GM12878 (cell line): ENCODE measurements at regions of chr11 and their contacts with region 1.

Region 1: DNA sequence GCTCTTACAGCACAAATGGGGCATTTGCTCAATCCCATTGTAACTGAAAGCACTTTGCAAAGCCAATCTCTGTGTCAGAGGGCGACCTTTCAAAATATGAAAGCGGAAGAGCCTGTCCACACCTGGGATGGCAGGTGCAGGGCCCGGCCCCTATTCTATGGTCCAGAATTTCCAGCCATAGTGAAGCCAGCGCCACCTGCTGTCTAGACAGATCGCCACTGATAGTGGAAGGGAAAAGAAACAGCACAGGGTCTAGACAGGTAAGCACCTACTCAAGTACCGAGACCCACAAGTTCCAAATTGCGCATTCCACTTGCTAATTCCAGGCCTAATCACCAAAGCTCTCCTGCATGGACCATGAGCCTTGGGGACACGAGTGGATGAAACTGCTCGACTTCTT is 141.4 kb downstream of the NTM start:
- DNase-seq: no peak
- ATAC-seq: peak; percentile 80
- H3K4me3 ChIP-seq: no peak overlapping the region
- H3K27ac ChIP-seq: no peak overlapping the region
- H3K4me1 ChIP-seq: no peaks in the 10 kb centered on the region
- H3K27me3 ChIP-seq: no peaks in the 10 kb centered on the region
- CTCF ChIP-seq: peak; percentile 57 to 64 (median 60)
- EP300 ChIP-seq: no peak
- POLR2A ChIP-seq: no peak
- RAD21 ChIP-seq: peak; percentile 56

Region 2: DNA sequence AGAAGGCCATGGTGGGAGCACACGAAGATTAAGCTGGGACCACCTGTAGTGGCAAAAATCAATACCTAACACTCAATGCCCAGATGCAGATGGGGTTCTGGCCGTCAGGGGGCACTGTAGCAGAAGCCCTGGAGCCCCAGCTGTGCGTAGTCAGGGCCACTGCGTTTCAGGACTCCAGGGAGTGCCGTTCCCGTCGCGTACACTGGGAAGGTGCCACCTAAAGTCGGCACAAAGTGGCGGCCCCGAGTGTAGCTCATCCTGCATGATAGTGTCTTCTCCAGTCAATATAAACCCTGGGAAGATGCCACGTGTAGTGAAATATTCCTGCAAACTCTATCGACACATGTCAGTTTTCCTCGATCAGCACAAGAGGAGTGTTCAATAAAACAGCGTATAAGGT is 265.1 kb before region 1 on chr11:
- CTCF ChIA-PET with region 1: interaction called, 3 read pairs
- POLR2A ChIA-PET with region 1: no interaction called
- RAD21 ChIA-PET with region 1: interaction called, 3 read pairs
- SMC1A ChIA-PET with region 1: no interaction called
- in situ Hi-C with region 1: no loop called
- intact Hi-C with region 1: loop called (anchors 10 kb)
- DNase-seq: no peak
- ATAC-seq: peak; percentile 66
- H3K4me3 ChIP-seq: no peak overlapping the region
- H3K27ac ChIP-seq: no peak overlapping the region
- H3K4me1 ChIP-seq: no peaks in the 10 kb centered on the region
- H3K27me3 ChIP-seq: no peaks in the 10 kb centered on the region; a peak in 2 of 4 replicates
- CTCF ChIP-seq: peak; percentile 42 to 59 (median 48); a peak in 5 of 6 replicates
- EP300 ChIP-seq: no peak
- POLR2A ChIP-seq: no peak
- RAD21 ChIP-seq: peak; percentile 33

Region 3: GRCh38 chr11:131408025-131408640 is 103.7 kb before region 1 on chr11:
- CTCF ChIA-PET with region 1: no interaction called
- POLR2A ChIA-PET with region 1: no interaction called
- RAD21 ChIA-PET with region 1: no interaction called
- SMC1A ChIA-PET with region 1: no interaction called
- in situ Hi-C with region 1: no loop called
- intact Hi-C with region 1: loop called (anchors 1 kb)
- DNase-seq: no peak
- ATAC-seq: peak; percentile 74
- H3K4me3 ChIP-seq: no peak overlapping the region
- H3K27ac ChIP-seq: no peak overlapping the region
- H3K4me1 ChIP-seq: no peaks in the 10 kb centered on the region
- H3K27me3 ChIP-seq: no peaks in the 10 kb centered on the region; a peak in 1 of 4 replicates
- CTCF ChIP-seq: peak; percentile 50 to 62 (median 54); a peak in 4 of 6 replicates
- EP300 ChIP-seq: no peak
- POLR2A ChIP-seq: no peak
- RAD21 ChIP-seq: 0 out of 2 replicates have a peak, but pooled peaks have one; percentile 26

Region 4: GRCh38 chr11:132604431-132604830 is 1092.6 kb after region 1 on chr11:
- CTCF ChIA-PET with region 1: no interaction called
- POLR2A ChIA-PET with region 1: no interaction called
- RAD21 ChIA-PET with region 1: no interaction called
- SMC1A ChIA-PET with region 1: no interaction called
- in situ Hi-C with region 1: no loop called
- intact Hi-C with region 1: no loop called
- DNase-seq: no peak
- ATAC-seq: no peak
- H3K4me3 ChIP-seq: no peak overlapping the region
- H3K27ac ChIP-seq: no peak overlapping the region
- H3K4me1 ChIP-seq: no peaks in the 10 kb centered on the region
- H3K27me3 ChIP-seq: no peaks in the 10 kb centered on the region
- CTCF ChIP-seq: no peak
- EP300 ChIP-seq: no peak
- POLR2A ChIP-seq: no peak
- RAD21 ChIP-seq: no peak